CD8-positive, alpha-beta T cell (primary cell): ENCODE measurements at regions of chr15 and their contacts with region 1.

Region 1: GRCh38 chr15:63999177-63999576 is 47.1 kb downstream of the DAPK2 start:
- DNase-seq: no peak
- ATAC-seq: no peak
- H3K4me3 ChIP-seq: no peak overlapping the region
- H3K4me3 Mint-ChIP-seq: no peak overlapping the region
- H3K27ac ChIP-seq: no peak overlapping the region
- H3K27ac Mint-ChIP-seq: no peak overlapping the region
- H3K4me1 ChIP-seq: no peaks in the 10 kb centered on the region
- H3K4me1 Mint-ChIP-seq: peaks cover 20% of the 10 kb centered on the region
- H3K27me3 ChIP-seq: no peaks in the 10 kb centered on the region
- H3K27me3 Mint-ChIP-seq: peaks cover 3% of the 10 kb centered on the region
- CTCF ChIP-seq: no peak

Region 2: DNA sequence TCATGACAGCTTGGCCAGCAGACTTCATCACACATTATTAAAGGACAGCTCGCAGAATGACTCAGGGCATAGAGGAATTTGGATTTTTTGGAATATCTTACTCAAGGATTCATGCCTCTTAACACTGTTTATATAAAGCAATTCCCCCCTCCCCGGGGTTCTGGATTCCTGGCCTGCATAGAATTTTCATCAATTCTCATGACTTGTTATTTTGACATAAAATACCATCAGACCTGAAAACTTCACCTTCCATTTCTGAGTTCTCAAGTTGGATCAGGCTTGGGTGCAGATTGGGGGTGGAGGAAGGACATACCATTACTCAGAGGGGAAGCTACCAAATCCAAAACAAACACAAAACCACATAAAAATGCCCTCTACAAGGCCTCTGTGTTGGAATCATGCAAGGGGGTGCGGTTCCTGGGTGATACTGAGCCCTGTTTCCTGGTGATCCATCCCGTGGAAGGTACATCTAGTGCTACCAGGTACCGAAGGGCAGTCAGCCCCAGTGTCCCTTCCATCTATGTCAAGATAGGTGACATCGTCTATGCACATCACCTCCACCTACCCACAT is 48.2 kb before region 1 on chr15:
- CTCF ChIA-PET with region 1: no interaction called
- POLR2A ChIA-PET with region 1: no interaction called
- intact Hi-C with region 1: loop called in 1 of 2 experiments (anchors 5 kb)
- DNase-seq: no peak
- ATAC-seq: no peak
- H3K4me3 ChIP-seq: no peak overlapping the region
- H3K4me3 Mint-ChIP-seq: no peak overlapping the region
- H3K27ac ChIP-seq: no peak overlapping the region
- H3K27ac Mint-ChIP-seq: no peak overlapping the region
- H3K4me1 ChIP-seq: no peaks in the 10 kb centered on the region
- H3K4me1 Mint-ChIP-seq: peaks cover 3% of the 10 kb centered on the region
- H3K27me3 ChIP-seq: no peaks in the 10 kb centered on the region
- H3K27me3 Mint-ChIP-seq: no peaks in the 10 kb centered on the region
- CTCF ChIP-seq: no peak

Region 3: GRCh38 chr15:64443747-64444621 is 444.8 kb after region 1 on chr15:
- CTCF ChIA-PET with region 1: no interaction called
- POLR2A ChIA-PET with region 1: no interaction called
- intact Hi-C with region 1: no loop called
- DNase-seq: peak in 1 of 9 experiments; percentile 36
- ATAC-seq: peak; percentile 38
- H3K4me3 ChIP-seq: no peak overlapping the region
- H3K4me3 Mint-ChIP-seq: peak overlapping the region; percentile 45
- H3K27ac ChIP-seq: no peak overlapping the region
- H3K27ac Mint-ChIP-seq: peak overlapping the region; percentile 84
- H3K4me1 ChIP-seq: peaks cover 38% of the 10 kb centered on the region
- H3K4me1 Mint-ChIP-seq: peaks cover 49% of the 10 kb centered on the region
- H3K27me3 ChIP-seq: no peaks in the 10 kb centered on the region
- H3K27me3 Mint-ChIP-seq: no peaks in the 10 kb centered on the region
- CTCF ChIP-seq: no peak